ENCODE measurements at regions of chr11 and their contacts with region 1.

Region 1: GRCh38 chr11:87722756-87723565 is 452.3 kb downstream of the RAB38 start:
- DNase-seq: peak; percentile 54 to 65
- H3K4me3 ChIP-seq: no peak overlapping the region
- H3K4me3 Mint-ChIP-seq: no peak overlapping the region
- H3K27ac Mint-ChIP-seq: no peak overlapping the region
- H3K4me1 ChIP-seq: peaks cover 7% of the 10 kb centered on the region
- H3K4me1 Mint-ChIP-seq: peaks cover 7% of the 10 kb centered on the region
- H3K27me3 ChIP-seq: no peaks in the 10 kb centered on the region
- H3K27me3 Mint-ChIP-seq: peaks cover 3% of the 10 kb centered on the region
- CTCF ChIP-seq: peak; percentile 96

Region 2: DNA sequence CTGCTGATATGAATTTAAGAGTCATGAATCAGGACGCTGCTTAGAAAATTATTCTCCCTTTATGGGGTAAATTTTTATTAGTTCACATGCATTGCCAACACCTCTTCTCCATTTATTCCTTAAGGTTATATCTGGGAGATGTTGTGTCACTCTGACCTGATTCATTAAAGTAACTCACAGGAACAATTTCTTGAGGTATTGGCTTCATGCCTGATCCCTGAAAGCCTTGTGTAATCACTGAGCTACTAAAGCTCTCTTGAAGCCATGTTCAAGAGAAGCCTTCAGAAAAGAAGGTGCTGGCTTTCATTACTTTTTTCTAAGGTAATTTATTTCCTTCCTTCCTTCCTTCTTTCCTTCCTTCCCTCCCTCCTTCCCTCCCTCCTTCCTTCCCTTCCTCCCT is 31.7 kb after region 1 on chr11:
- CTCF ChIA-PET with region 1: no interaction called
- POLR2A ChIA-PET with region 1: no interaction called
- intact Hi-C with region 1: no loop called
- DNase-seq: no peak
- H3K4me3 ChIP-seq: no peak overlapping the region
- H3K4me3 Mint-ChIP-seq: no peak overlapping the region
- H3K27ac Mint-ChIP-seq: no peak overlapping the region
- H3K4me1 ChIP-seq: no peaks in the 10 kb centered on the region
- H3K4me1 Mint-ChIP-seq: no peaks in the 10 kb centered on the region
- H3K27me3 ChIP-seq: 0 out of 2 replicates have a peak, but pooled peaks cover 1% of the 10 kb centered on the region
- H3K27me3 Mint-ChIP-seq: peaks cover 5% of the 10 kb centered on the region
- CTCF ChIP-seq: no peak

Region 3: GRCh38 chr11:87859583-87860149 is 136.7 kb after region 1 on chr11:
- CTCF ChIA-PET with region 1: no interaction called
- POLR2A ChIA-PET with region 1: no interaction called
- intact Hi-C with region 1: loop called (anchors 10 kb)
- DNase-seq: no peak
- H3K4me3 ChIP-seq: no peak overlapping the region
- H3K4me3 Mint-ChIP-seq: no peak overlapping the region
- H3K27ac Mint-ChIP-seq: no peak overlapping the region
- H3K4me1 ChIP-seq: no peaks in the 10 kb centered on the region
- H3K4me1 Mint-ChIP-seq: no peaks in the 10 kb centered on the region
- H3K27me3 ChIP-seq: no peaks in the 10 kb centered on the region
- H3K27me3 Mint-ChIP-seq: no peaks in the 10 kb centered on the region
- CTCF ChIP-seq: no peak

Measured in Caco-2 (cell line).